ENCODE measurements at regions of chr18 and their contacts with region 1.

Region 1: DNA sequence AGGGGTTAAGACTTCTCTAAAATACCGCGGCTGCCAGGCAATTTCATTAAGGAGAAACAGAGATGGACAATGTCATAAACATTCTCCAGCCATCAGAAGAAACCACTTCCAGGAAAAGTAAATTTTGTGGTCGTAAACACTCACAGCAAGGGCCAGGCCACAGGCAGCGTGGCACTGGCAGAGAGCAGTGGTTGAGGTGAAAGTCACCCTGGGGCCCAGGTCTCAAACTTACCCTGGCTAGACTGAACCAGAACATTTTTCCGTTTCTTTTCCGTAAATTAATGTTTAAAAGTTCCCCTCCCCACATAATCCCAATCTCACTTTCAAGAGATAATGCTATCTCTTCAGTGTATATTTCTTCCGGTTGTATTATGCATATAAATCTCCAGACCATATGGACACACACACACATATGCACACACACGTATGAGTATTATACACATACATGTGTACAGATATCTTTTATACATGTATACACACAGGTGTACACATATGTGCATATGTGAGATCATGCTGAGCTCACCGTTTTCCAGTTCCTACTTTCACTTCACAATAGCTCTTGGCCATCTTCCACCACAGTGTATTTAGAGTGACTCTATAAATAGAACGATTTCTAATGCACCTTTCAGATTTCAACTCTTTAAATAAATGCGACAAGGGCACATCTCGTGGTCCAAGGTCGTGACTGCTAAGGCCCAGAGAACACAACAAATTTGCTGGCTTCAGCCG is 90.1 kb downstream of the MALT1 start:
- DNase-seq: peak in 1 of 9 donors; percentile 4
- ATAC-seq: no peak
- H3K4me3 ChIP-seq: no peak overlapping the region
- H3K4me3 Mint-ChIP-seq: peak overlapping the region in 3 of 10 donors; percentile 0 to 69 (median 36)
- H3K27ac ChIP-seq: no peak overlapping the region
- H3K27ac Mint-ChIP-seq: peak overlapping the region in 1 of 9 donors; percentile 65
- H3K4me1 ChIP-seq: peaks cover 6 to 15% of the 10 kb centered on the region in 2 donors
- H3K4me1 Mint-ChIP-seq: peaks cover 16 to 56% (median 45%) of the 10 kb centered on the region in 7 donors
- H3K27me3 ChIP-seq: peaks cover 0 to 6% of the 10 kb centered on the region in 2 donors
- H3K27me3 Mint-ChIP-seq: peaks cover 8 to 36% (median 17%) of the 10 kb centered on the region in 5 donors

Region 2: DNA sequence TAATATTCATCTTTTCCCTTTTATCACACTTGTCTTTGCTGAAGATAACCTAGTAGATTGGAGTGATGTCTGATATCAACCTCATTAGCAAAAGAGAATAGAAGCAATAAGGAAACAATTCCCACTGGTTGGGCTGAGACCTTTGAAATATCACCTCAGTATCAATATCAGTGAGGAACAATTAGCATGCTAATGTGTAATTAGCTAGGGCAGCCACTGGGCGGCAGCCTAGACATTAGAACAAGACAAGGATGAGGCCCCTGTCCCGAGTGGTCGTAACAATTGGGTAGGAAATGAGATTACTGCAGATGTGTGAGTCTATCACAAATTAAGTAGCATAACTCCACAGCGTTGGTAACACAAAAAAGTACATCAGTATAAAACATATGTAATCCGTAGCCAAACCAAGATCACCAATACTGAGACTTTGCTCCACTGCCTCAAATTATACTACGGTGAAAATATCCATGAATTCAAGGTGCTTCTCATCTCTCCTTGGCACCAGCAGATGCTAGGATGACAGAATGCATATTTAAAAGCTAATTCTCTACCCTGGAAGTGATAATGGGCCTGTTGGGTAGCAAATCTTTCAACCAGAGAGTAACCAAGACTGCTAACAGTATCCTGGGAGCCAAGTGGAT is 231.6 kb before region 1 on chr18:
- CTCF ChIA-PET with region 1: interaction called, 148 read pairs
- POLR2A ChIA-PET with region 1: interaction called, 11 read pairs
- intact Hi-C with region 1: loop called (anchors 1 kb)
- DNase-seq: peak; percentile 39 to 71 (median 60)
- ATAC-seq: peak; percentile 87
- H3K4me3 ChIP-seq: no peak overlapping the region
- H3K4me3 Mint-ChIP-seq: no peak overlapping the region
- H3K27ac ChIP-seq: no peak overlapping the region
- H3K27ac Mint-ChIP-seq: no peak overlapping the region
- H3K4me1 ChIP-seq: no peaks in the 10 kb centered on the region
- H3K4me1 Mint-ChIP-seq: peaks cover 0 to 13% (median 6%) of the 10 kb centered on the region in 7 donors
- H3K27me3 ChIP-seq: no peaks in the 10 kb centered on the region
- H3K27me3 Mint-ChIP-seq: peaks cover 0 to 41% (median 0%) of the 10 kb centered on the region in 5 donors

Region 3: DNA sequence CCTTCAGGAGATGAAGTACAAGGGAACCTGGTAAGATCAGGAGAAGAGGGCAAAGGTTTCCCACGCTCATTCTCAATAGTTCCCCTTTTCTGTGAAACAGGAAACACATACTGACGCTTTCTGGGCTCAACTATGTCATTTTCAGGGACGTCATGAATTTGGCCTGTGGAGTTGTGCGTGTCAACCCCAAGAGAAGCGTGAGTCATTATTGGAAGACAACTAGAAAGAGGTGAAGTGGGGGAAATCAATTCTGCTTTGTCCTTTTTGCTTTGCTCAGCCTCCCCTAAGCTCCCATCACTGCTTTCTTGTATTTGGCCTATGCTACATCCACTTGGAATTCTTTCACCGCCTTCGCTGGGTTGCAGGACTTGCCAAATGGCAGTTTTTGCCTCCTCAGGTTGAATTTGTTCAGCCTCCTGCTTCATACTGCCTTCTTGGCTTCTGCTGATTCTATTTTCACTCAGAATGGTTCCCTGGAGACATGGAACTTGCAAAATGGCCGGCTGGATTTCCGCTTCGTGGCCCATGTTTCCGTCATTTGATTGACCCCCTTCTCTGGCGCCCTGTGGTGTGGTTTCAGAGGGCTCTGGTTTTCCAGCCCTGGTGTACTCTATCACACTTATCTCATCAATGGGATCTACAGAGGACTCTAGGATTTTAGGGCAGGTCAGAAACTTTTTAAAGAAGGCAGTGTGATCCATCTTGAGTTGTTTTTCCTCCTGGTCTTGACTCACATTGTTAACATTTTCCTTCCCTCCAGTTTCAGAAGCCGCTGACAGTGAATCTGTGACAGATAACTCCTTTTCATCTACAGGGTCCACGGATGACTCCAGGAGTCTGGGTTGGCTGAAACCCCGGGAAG is 225.8 kb before region 1 on chr18:
- CTCF ChIA-PET with region 1: interaction called, 148 read pairs
- POLR2A ChIA-PET with region 1: interaction called, 11 read pairs
- intact Hi-C with region 1: no loop called
- DNase-seq: no peak
- ATAC-seq: peak; percentile 76
- H3K4me3 ChIP-seq: no peak overlapping the region
- H3K4me3 Mint-ChIP-seq: no peak overlapping the region
- H3K27ac ChIP-seq: no peak overlapping the region
- H3K27ac Mint-ChIP-seq: no peak overlapping the region
- H3K4me1 ChIP-seq: no peaks in the 10 kb centered on the region
- H3K4me1 Mint-ChIP-seq: peaks cover 5 to 37% (median 15%) of the 10 kb centered on the region in 7 donors
- H3K27me3 ChIP-seq: no peaks in the 10 kb centered on the region
- H3K27me3 Mint-ChIP-seq: peaks cover 0 to 42% (median 0%) of the 10 kb centered on the region in 5 donors

Region 4: GRCh38 chr18:58541789-58542425 is 219.5 kb before region 1 on chr18:
- CTCF ChIA-PET with region 1: interaction called, 22 read pairs
- POLR2A ChIA-PET with region 1: no interaction called
- intact Hi-C with region 1: loop called in 1 of 2 experiments (anchors 1 kb)
- DNase-seq: peak in 1 of 9 donors; percentile 52
- ATAC-seq: peak; percentile 79
- H3K4me3 ChIP-seq: no peak overlapping the region
- H3K4me3 Mint-ChIP-seq: peak overlapping the region in 1 of 10 donors; percentile 23
- H3K27ac ChIP-seq: no peak overlapping the region
- H3K27ac Mint-ChIP-seq: peak overlapping the region in 1 of 9 donors; percentile 29
- H3K4me1 ChIP-seq: peaks cover 7 to 14% of the 10 kb centered on the region in 2 donors
- H3K4me1 Mint-ChIP-seq: peaks cover 23 to 59% (median 40%) of the 10 kb centered on the region in 7 donors
- H3K27me3 ChIP-seq: no peaks in the 10 kb centered on the region
- H3K27me3 Mint-ChIP-seq: peaks cover 0 to 41% (median 0%) of the 10 kb centered on the region in 5 donors

Region 5: DNA sequence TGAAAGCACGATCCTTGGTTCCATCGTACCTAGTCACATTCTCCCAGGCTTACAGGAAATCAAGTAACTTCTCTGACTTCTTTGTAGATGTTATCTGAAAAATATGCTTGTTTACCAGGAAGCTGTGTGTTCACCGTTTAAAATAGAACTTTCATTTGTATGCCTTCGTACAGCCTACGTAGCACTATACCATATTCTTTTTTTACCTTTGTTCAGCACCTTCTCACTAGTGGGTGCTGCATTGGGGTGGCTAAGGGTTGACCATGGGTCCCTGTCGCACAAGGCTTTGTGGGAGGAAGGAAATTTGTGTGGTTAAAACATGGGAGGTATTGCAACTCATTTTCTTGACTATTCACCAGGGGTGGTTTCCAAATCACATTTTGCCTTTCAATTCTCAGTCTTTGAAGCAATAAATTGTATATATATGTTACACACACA is 73.5 kb before region 1 on chr18:
- CTCF ChIA-PET with region 1: interaction called, 4 read pairs
- POLR2A ChIA-PET with region 1: interaction called, 3 read pairs
- intact Hi-C with region 1: loop called in 1 of 2 experiments (anchors 5 kb)
- DNase-seq: peak in 8 of 9 donors; percentile 66 to 91 (median 86)
- ATAC-seq: peak; percentile 97
- H3K4me3 ChIP-seq: peak overlapping the region; percentile 15
- H3K4me3 Mint-ChIP-seq: peak overlapping the region; percentile 47 to 93 (median 87)
- H3K27ac ChIP-seq: peak overlapping the region; percentile 68
- H3K27ac Mint-ChIP-seq: peak overlapping the region in 8 of 9 donors; percentile 92 to 99 (median 96)
- H3K4me1 ChIP-seq: peaks cover 35 to 72% of the 10 kb centered on the region in 2 donors
- H3K4me1 Mint-ChIP-seq: peaks cover 43 to 89% (median 82%) of the 10 kb centered on the region in 7 donors
- H3K27me3 ChIP-seq: no peaks in the 10 kb centered on the region
- H3K27me3 Mint-ChIP-seq: no peaks in the 10 kb centered on the region

Region 6: GRCh38 chr18:58716060-58716756 is 45.2 kb before region 1 on chr18:
- CTCF ChIA-PET with region 1: interaction called, 3 read pairs
- POLR2A ChIA-PET with region 1: no interaction called
- intact Hi-C with region 1: loop called in 1 of 2 experiments (anchors 5 kb)
- DNase-seq: peak in 7 of 9 donors; percentile 19 to 59 (median 44)
- ATAC-seq: peak; percentile 86
- H3K4me3 ChIP-seq: no peak overlapping the region
- H3K4me3 Mint-ChIP-seq: peak overlapping the region; percentile 63 to 92 (median 80)
- H3K27ac ChIP-seq: peak overlapping the region; percentile 44
- H3K27ac Mint-ChIP-seq: peak overlapping the region; percentile 77 to 94 (median 87)
- H3K4me1 ChIP-seq: peaks cover 25 to 32% of the 10 kb centered on the region in 2 donors
- H3K4me1 Mint-ChIP-seq: peaks cover 38 to 92% (median 76%) of the 10 kb centered on the region in 7 donors
- H3K27me3 ChIP-seq: no peaks in the 10 kb centered on the region
- H3K27me3 Mint-ChIP-seq: no peaks in the 10 kb centered on the region

Region 7: GRCh38 chr18:58748899-58749595 is 12.4 kb before region 1 on chr18:
- CTCF ChIA-PET with region 1: interaction called, 24 read pairs
- POLR2A ChIA-PET with region 1: no interaction called
- intact Hi-C with region 1: no loop called
- DNase-seq: no peak
- ATAC-seq: no peak
- H3K4me3 ChIP-seq: no peak overlapping the region
- H3K4me3 Mint-ChIP-seq: no peak overlapping the region
- H3K27ac ChIP-seq: no peak overlapping the region
- H3K27ac Mint-ChIP-seq: no peak overlapping the region
- H3K4me1 ChIP-seq: no peaks in the 10 kb centered on the region
- H3K4me1 Mint-ChIP-seq: peaks cover 0 to 6% (median 0%) of the 10 kb centered on the region in 7 donors
- H3K27me3 ChIP-seq: no peaks in the 10 kb centered on the region
- H3K27me3 Mint-ChIP-seq: no peaks in the 10 kb centered on the region

Region 8: GRCh38 chr18:58949031-58949430 is 187.6 kb after region 1 on chr18:
- CTCF ChIA-PET with region 1: no interaction called
- POLR2A ChIA-PET with region 1: no interaction called
- intact Hi-C with region 1: no loop called
- DNase-seq: no peak
- ATAC-seq: no peak
- H3K4me3 ChIP-seq: no peak overlapping the region
- H3K4me3 Mint-ChIP-seq: no peak overlapping the region
- H3K27ac ChIP-seq: no peak overlapping the region
- H3K27ac Mint-ChIP-seq: no peak overlapping the region
- H3K4me1 ChIP-seq: no peaks in the 10 kb centered on the region
- H3K4me1 Mint-ChIP-seq: no peaks in the 10 kb centered on the region
- H3K27me3 ChIP-seq: no peaks in the 10 kb centered on the region
- H3K27me3 Mint-ChIP-seq: peaks cover 5 to 16% (median 10%) of the 10 kb centered on the region in 5 donors

Measured in naive thymus-derived CD4-positive, alpha-beta T cell (primary cell).